CD8-positive, alpha-beta T cell (primary cell): ENCODE measurements at regions of chr11 and their contacts with region 1.

Region 1: DNA sequence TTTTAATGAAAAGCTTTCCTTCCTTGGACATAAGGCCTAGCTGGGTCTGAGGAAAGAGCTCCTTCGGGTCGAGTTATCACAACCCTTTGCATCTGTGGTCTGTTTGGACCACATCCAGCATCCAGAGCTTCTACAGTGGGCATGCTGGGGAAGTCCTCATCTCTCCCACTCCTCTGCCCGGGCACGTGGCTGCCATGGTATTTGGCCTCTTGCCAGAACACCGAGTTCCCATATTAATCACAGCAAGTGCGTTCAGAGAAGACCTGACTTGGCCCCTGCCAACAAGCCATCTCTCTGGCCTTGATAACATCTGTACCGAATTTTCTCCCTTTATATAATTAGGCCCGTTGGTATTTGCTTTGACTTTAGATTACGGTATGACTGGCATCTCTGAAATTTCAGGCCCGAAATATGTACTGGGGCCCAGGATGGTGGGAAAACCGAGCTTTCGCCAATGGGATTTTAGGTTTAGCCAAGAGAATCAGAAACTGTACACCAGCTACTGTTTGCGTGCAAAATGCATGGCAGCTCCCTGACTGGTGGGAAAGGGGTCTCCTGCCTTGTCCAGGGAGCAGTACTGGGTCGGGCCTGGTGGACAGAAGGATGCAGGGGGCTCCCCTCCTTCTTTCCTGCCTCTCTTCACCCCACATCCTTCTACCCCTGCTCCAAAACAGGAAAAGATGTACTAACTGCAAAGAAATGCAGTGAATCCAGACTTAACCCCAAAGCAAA is 90.1 kb downstream of the MICAL2 start:
- DNase-seq: no peak
- ATAC-seq: no peak
- H3K4me3 ChIP-seq: no peak overlapping the region
- H3K4me3 Mint-ChIP-seq: no peak overlapping the region
- H3K27ac ChIP-seq: no peak overlapping the region
- H3K27ac Mint-ChIP-seq: peak overlapping the region; percentile 74
- H3K4me1 ChIP-seq: peaks cover 39% of the 10 kb centered on the region
- H3K4me1 Mint-ChIP-seq: peaks cover 54% of the 10 kb centered on the region
- H3K27me3 ChIP-seq: no peaks in the 10 kb centered on the region
- H3K27me3 Mint-ChIP-seq: no peaks in the 10 kb centered on the region
- CTCF ChIP-seq: no peak

Region 2: GRCh38 chr11:12159351-12160099 is 40.9 kb before region 1 on chr11:
- CTCF ChIA-PET with region 1: interaction called, 3 read pairs
- POLR2A ChIA-PET with region 1: no interaction called
- intact Hi-C with region 1: loop called in 1 of 2 experiments (anchors 5 kb)
- DNase-seq: no peak
- ATAC-seq: no peak
- H3K4me3 ChIP-seq: no peak overlapping the region
- H3K4me3 Mint-ChIP-seq: no peak overlapping the region
- H3K27ac ChIP-seq: no peak overlapping the region
- H3K27ac Mint-ChIP-seq: no peak overlapping the region
- H3K4me1 ChIP-seq: peaks cover 11% of the 10 kb centered on the region
- H3K4me1 Mint-ChIP-seq: peaks cover 18% of the 10 kb centered on the region
- H3K27me3 ChIP-seq: no peaks in the 10 kb centered on the region
- H3K27me3 Mint-ChIP-seq: no peaks in the 10 kb centered on the region
- CTCF ChIP-seq: no peak

Region 3: GRCh38 chr11:12189543-12190235 is 10.8 kb before region 1 on chr11:
- CTCF ChIA-PET with region 1: interaction called, 11 read pairs
- POLR2A ChIA-PET with region 1: interaction called, 4 read pairs
- intact Hi-C with region 1: no loop called
- DNase-seq: peak in 6 of 9 experiments; percentile 21 to 56 (median 46)
- ATAC-seq: peak; percentile 39
- H3K4me3 ChIP-seq: no peak overlapping the region
- H3K4me3 Mint-ChIP-seq: peak overlapping the region; percentile 43
- H3K27ac ChIP-seq: no peak overlapping the region
- H3K27ac Mint-ChIP-seq: peak overlapping the region; percentile 47
- H3K4me1 ChIP-seq: peaks cover 17% of the 10 kb centered on the region
- H3K4me1 Mint-ChIP-seq: peaks cover 36% of the 10 kb centered on the region
- H3K27me3 ChIP-seq: no peaks in the 10 kb centered on the region
- H3K27me3 Mint-ChIP-seq: no peaks in the 10 kb centered on the region
- CTCF ChIP-seq: no peak

Region 4: DNA sequence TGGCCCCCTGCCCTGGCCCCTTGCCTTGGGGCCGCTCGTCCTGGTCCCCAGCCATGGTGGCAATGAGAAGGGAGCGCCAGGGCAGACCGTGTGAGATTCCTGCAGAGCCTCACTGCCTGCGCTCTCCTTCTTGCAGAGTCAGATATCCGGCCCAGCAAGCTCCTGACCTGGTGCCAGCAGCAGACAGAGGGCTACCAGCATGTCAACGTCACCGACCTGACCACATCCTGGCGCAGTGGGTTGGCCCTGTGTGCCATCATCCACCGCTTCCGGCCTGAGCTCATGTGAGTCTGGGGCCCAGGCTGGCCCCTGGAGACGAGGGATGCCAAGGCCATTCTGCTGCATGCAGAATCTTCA is 24.1 kb after region 1 on chr11:
- CTCF ChIA-PET with region 1: interaction called, 9 read pairs
- POLR2A ChIA-PET with region 1: interaction called, 20 read pairs
- intact Hi-C with region 1: loop called in 1 of 2 experiments (anchors 1 kb)
- DNase-seq: peak; percentile 76 to 96 (median 92)
- ATAC-seq: peak; percentile 89
- H3K4me3 ChIP-seq: peak overlapping the region; percentile 35 to 50
- H3K4me3 Mint-ChIP-seq: peak overlapping the region; percentile 65
- H3K27ac ChIP-seq: peak overlapping the region; percentile 47 to 91
- H3K27ac Mint-ChIP-seq: peak overlapping the region; percentile 91
- H3K4me1 ChIP-seq: peaks cover 45% of the 10 kb centered on the region
- H3K4me1 Mint-ChIP-seq: peaks cover 51% of the 10 kb centered on the region
- H3K27me3 ChIP-seq: no peaks in the 10 kb centered on the region
- H3K27me3 Mint-ChIP-seq: no peaks in the 10 kb centered on the region
- CTCF ChIP-seq: no peak